Activated CD4-positive, alpha-beta T cell treated with anti-CD3 and anti-CD28 coated beads, Interleukin-2, amount 10 ng/mL, durations not matched to agents 24 days and 14 days (primary cell): ENCODE measurements at regions of chr11 and their contacts with region 1.

Region 1: GRCh38 chr11:76339221-76339620 is 41.7 kb downstream of the THAP12 start:
- DNase-seq: peak; percentile 68
- H3K4me3 Mint-ChIP-seq: no peak overlapping the region
- H3K27ac Mint-ChIP-seq: peak overlapping the region; percentile 12
- H3K4me1 Mint-ChIP-seq: peaks cover 22% of the 10 kb centered on the region
- H3K27me3 Mint-ChIP-seq: no peaks in the 10 kb centered on the region

Region 2: GRCh38 chr11:76361776-76362175 is 22.6 kb after region 1 on chr11:
- intact Hi-C with region 1: loop called (anchors 2 kb)
- DNase-seq: no peak
- H3K4me3 Mint-ChIP-seq: no peak overlapping the region
- H3K27ac Mint-ChIP-seq: no peak overlapping the region
- H3K4me1 Mint-ChIP-seq: peaks cover 15% of the 10 kb centered on the region
- H3K27me3 Mint-ChIP-seq: no peaks in the 10 kb centered on the region